ENCODE measurements at regions of chr19 and their contacts with region 1.

Region 1: GRCh38 chr19:7943444-7944176 is at the start of gene TIMM44:
- DNase-seq: peak; percentile 91 to 99 (median 98)
- ATAC-seq: peak; percentile 98
- H3K4me3 ChIP-seq: peak within 1 kb of the TSS; percentile 92
- H3K4me3 Mint-ChIP-seq: peak within 1 kb of the TSS; percentile 83 to 99 (median 94)
- H3K27ac ChIP-seq: peak within 1 kb of the TSS; percentile 96
- H3K27ac Mint-ChIP-seq: peak within 1 kb of the TSS; percentile 78 to 98 (median 96)
- H3K4me1 ChIP-seq: peaks cover 7 to 9% of the 10 kb centered on the region in 2 donors
- H3K4me1 Mint-ChIP-seq: peaks cover 10 to 44% (median 28%) of the 10 kb centered on the region in 7 donors
- H3K27me3 ChIP-seq: no peaks in the 10 kb centered on the region
- H3K27me3 Mint-ChIP-seq: no peaks in the 10 kb centered on the region
- total RNA-seq, gene TIMM44: 65.3 to 97.6 (median 73.8) TPM

Region 2: GRCh38 chr19:7680606-7681339 is 262.8 kb before region 1 on chr19 and contains the start of gene TRAPPC5:
- CTCF ChIA-PET with region 1: no interaction called
- POLR2A ChIA-PET with region 1: no interaction called
- intact Hi-C with region 1: loop called in 1 of 2 experiments (anchors 1 kb)
- DNase-seq: peak; percentile 80 to 95 (median 89)
- ATAC-seq: peak; percentile 86
- H3K4me3 ChIP-seq: peak within 1 kb of the TSS; percentile 84
- H3K4me3 Mint-ChIP-seq: peak within 1 kb of the TSS; percentile 83 to 96 (median 91)
- H3K27ac ChIP-seq: peak within 1 kb of the TSS; percentile 91
- H3K27ac Mint-ChIP-seq: peak within 1 kb of the TSS; percentile 54 to 95 (median 93)
- H3K4me1 ChIP-seq: peaks cover 26 to 32% of the 10 kb centered on the region in 2 donors
- H3K4me1 Mint-ChIP-seq: peaks cover 20 to 59% (median 46%) of the 10 kb centered on the region in 7 donors
- H3K27me3 ChIP-seq: peaks cover 0 to 6% of the 10 kb centered on the region in 2 donors
- H3K27me3 Mint-ChIP-seq: peaks cover 3 to 22% (median 8%) of the 10 kb centered on the region in 5 donors
- total RNA-seq, gene TRAPPC5: 43.7 to 79.3 (median 75.4) TPM

Region 3: GRCh38 chr19:7705387-7706187 is 238.0 kb before region 1 on chr19:
- CTCF ChIA-PET with region 1: no interaction called
- POLR2A ChIA-PET with region 1: no interaction called
- intact Hi-C with region 1: no loop called
- DNase-seq: peak; percentile 47 to 87 (median 79)
- ATAC-seq: peak; percentile 95
- H3K4me3 ChIP-seq: peak overlapping the region; percentile 34
- H3K4me3 Mint-ChIP-seq: peak overlapping the region; percentile 75 to 91 (median 83)
- H3K27ac ChIP-seq: peak overlapping the region; percentile 79
- H3K27ac Mint-ChIP-seq: peak overlapping the region; percentile 88 to 100 (median 97)
- H3K4me1 ChIP-seq: peaks cover 22 to 38% of the 10 kb centered on the region in 2 donors
- H3K4me1 Mint-ChIP-seq: peaks cover 27 to 71% (median 54%) of the 10 kb centered on the region in 7 donors
- H3K27me3 ChIP-seq: no peaks in the 10 kb centered on the region
- H3K27me3 Mint-ChIP-seq: peaks cover 0 to 20% (median 0%) of the 10 kb centered on the region in 5 donors

Region 4: DNA sequence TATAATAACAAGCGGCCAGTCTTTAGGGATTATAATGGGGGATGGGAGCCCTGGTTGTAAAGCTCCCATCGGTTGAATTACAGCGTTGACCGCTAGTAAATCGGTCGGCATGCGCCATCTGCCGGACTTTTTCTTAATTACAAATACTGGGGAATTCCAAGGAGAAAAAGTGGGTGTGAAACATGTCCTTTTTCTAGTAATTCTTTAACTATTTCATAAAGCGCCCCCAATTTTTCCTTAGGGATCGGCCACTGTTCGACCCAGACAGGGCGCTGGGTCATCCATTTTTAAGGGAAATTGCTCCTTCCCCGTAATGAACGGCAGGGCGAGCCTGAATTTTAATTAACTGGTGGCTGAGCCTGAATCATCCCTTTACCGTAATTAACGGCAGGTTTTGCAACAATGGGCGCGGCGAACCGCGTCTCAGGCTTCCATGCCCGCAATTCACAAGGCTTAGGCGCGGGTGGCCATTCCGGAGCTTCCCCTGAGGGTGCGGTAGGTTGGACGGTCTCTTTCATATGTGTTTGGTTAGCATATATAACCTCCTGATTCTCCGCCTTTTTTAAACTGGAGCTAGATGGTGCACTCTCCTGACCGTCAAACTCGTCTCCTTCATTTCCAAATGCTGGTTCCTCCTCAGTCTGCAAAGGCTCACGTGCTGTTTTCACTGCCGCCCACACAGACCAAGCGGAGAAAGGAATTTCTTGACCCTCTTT is 143.8 kb before region 1 on chr19:
- CTCF ChIA-PET with region 1: no interaction called
- POLR2A ChIA-PET with region 1: no interaction called
- intact Hi-C with region 1: no loop called
- DNase-seq: peak; percentile 13 to 61 (median 39)
- ATAC-seq: peak; percentile 71
- H3K4me3 ChIP-seq: no peak overlapping the region
- H3K4me3 Mint-ChIP-seq: peak overlapping the region in 1 of 10 donors; percentile 23
- H3K27ac ChIP-seq: no peak overlapping the region
- H3K27ac Mint-ChIP-seq: peak overlapping the region in 1 of 9 donors; percentile 63
- H3K4me1 ChIP-seq: no peaks in the 10 kb centered on the region
- H3K4me1 Mint-ChIP-seq: peaks cover 0 to 8% (median 6%) of the 10 kb centered on the region in 7 donors
- H3K27me3 ChIP-seq: no peaks in the 10 kb centered on the region
- H3K27me3 Mint-ChIP-seq: peaks cover 0 to 44% (median 11%) of the 10 kb centered on the region in 5 donors

Region 5: DNA sequence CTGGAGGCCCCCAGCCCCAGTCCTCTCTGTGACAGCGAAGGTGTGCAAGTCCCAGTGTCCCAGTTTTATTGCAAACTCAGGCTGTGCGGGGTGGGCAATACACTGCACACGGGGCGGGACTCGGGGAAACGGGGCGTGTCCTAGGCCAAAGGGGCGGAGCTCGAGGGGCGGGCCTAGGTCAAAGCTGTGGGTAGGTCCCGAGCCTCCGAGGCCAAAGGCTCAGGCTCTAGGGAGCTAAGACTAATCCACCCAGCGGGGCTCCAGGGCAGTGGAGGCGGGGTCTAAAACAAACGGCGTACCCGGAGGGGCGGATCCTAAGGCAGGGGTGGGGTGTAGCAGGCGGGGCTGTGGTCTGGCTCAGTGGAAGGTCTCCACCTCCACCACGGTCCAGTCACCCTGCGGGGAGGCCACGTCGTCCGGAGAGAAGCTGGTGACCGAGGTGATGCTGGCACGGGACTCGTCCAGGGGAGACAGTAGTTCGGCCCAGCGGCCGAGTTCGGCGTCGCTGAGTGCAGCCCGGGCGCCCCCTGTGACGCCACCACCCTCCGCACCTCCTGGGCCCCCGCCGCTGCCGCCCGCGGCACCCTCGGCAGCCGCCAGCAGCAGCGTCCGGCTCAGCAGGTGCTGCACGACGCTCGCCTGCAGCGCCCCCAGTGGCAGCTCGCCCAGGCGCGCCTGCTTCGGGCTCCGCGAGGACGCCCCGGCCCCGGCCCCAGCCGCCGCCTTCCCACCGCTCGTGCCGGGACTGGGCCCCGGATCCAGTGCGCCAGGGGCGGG is 74.7 kb before region 1 on chr19:
- CTCF ChIA-PET with region 1: interaction called, 6 read pairs
- POLR2A ChIA-PET with region 1: interaction called, 4 read pairs
- intact Hi-C with region 1: loop called in 1 of 2 experiments (anchors 1 kb)
- DNase-seq: peak in 8 of 9 donors; percentile 51 to 95 (median 89)
- ATAC-seq: peak; percentile 83
- H3K4me3 ChIP-seq: peak overlapping the region; percentile 74
- H3K4me3 Mint-ChIP-seq: peak overlapping the region; percentile 69 to 87 (median 81)
- H3K27ac ChIP-seq: peak overlapping the region; percentile 69
- H3K27ac Mint-ChIP-seq: peak overlapping the region; percentile 34 to 90 (median 58)
- H3K4me1 ChIP-seq: peaks cover 12 to 19% of the 10 kb centered on the region in 2 donors
- H3K4me1 Mint-ChIP-seq: peaks cover 24 to 39% (median 36%) of the 10 kb centered on the region in 7 donors
- H3K27me3 ChIP-seq: peaks cover 0 to 2% of the 10 kb centered on the region in 2 donors
- H3K27me3 Mint-ChIP-seq: peaks cover 0 to 62% (median 8%) of the 10 kb centered on the region in 5 donors

Region 6: DNA sequence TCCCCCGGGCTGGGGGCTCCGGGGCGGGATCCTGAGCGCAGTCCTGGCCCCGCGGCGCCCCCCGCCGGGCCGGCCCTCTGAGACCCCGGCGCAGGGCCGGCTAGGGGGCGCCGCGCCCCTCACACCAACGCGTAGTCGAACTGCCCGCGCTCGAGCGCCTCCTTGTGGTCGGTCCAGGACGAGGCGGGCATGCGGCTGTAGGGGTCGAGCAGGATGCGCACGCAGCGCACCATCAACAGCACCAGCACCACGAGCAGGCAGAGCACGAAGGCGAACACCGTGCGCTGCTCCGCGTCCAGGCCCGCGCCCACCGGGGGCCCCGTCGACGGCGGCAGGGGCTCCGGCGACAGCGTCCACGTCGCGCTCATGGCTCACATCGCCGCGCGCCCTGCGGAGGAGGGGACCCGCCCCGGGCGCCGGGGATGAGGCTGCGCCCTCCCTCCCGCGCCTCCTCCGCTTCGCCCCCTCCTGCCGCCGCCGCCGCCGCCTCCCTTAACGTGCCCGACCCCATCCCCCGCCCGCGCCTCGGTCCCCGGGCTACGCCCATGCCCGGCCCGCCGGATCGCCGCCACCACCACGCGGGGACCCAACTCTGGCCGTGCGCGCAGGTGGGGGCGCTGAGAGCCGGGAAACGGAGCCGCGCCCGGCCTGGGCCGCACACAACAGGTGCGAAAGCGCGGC is 18.3 kb before region 1 on chr19:
- CTCF ChIA-PET with region 1: interaction called, 14 read pairs
- POLR2A ChIA-PET with region 1: interaction called, 38 read pairs
- intact Hi-C with region 1: loop called (anchors 1 kb)
- DNase-seq: peak; percentile 58 to 83 (median 72)
- ATAC-seq: no peak
- H3K4me3 ChIP-seq: no peak overlapping the region
- H3K4me3 Mint-ChIP-seq: peak overlapping the region; percentile 74 to 88 (median 84)
- H3K27ac ChIP-seq: no peak overlapping the region
- H3K27ac Mint-ChIP-seq: peak overlapping the region in 6 of 9 donors; percentile 52 to 86 (median 76)
- H3K4me1 ChIP-seq: peaks cover 13 to 14% of the 10 kb centered on the region in 2 donors
- H3K4me1 Mint-ChIP-seq: peaks cover 5 to 38% (median 22%) of the 10 kb centered on the region in 7 donors
- H3K27me3 ChIP-seq: no peaks in the 10 kb centered on the region
- H3K27me3 Mint-ChIP-seq: no peaks in the 10 kb centered on the region

Region 7: DNA sequence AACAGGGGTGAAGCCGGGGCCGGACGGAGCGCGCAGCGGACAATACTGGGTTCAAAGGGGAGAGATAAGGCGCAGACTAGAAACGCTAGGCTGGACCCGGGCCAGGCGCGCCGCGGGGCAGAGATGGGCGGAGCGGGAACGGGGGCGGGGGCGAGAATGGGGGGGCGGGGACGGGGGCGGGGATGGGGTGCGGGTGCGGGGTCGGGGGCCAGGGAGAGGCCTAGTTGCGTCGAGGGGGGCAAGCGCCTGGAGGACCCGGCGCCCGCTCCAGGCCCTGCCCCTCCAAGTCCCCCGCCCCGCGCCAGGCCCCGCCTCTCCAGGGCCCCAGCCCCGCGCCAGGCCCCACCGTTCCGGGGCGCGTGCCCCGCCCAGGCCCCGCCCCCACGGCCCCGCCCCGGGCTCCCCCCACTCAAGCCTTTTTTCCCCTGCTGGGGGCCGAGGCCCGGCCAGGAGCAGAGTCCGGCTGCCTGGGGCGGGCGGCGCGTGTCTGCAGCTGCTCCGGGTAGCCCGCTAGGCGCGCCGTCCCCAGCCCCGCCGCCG is 265.4 kb after region 1 on chr19 and contains the start of gene CERS4:
- CTCF ChIA-PET with region 1: no interaction called
- POLR2A ChIA-PET with region 1: no interaction called
- intact Hi-C with region 1: loop called in 1 of 2 experiments (anchors 2 kb)
- DNase-seq: peak in 4 of 9 donors; percentile 69 to 82 (median 77)
- ATAC-seq: peak; percentile 92
- H3K4me3 ChIP-seq: peak within 1 kb of the TSS; percentile 84
- H3K4me3 Mint-ChIP-seq: peak within 1 kb of the TSS; percentile 72 to 94 (median 90)
- H3K27ac ChIP-seq: peak within 1 kb of the TSS; percentile 96
- H3K27ac Mint-ChIP-seq: peak within 1 kb of the TSS; percentile 72 to 96 (median 83)
- H3K4me1 ChIP-seq: peaks cover 5 to 17% of the 10 kb centered on the region in 2 donors
- H3K4me1 Mint-ChIP-seq: peaks cover 19 to 30% (median 27%) of the 10 kb centered on the region in 7 donors
- H3K27me3 ChIP-seq: no peaks in the 10 kb centered on the region
- H3K27me3 Mint-ChIP-seq: peaks cover 0 to 9% (median 0%) of the 10 kb centered on the region in 5 donors
- total RNA-seq, gene CERS4: 17.2 to 32.4 (median 27.4) TPM

Region 8: DNA sequence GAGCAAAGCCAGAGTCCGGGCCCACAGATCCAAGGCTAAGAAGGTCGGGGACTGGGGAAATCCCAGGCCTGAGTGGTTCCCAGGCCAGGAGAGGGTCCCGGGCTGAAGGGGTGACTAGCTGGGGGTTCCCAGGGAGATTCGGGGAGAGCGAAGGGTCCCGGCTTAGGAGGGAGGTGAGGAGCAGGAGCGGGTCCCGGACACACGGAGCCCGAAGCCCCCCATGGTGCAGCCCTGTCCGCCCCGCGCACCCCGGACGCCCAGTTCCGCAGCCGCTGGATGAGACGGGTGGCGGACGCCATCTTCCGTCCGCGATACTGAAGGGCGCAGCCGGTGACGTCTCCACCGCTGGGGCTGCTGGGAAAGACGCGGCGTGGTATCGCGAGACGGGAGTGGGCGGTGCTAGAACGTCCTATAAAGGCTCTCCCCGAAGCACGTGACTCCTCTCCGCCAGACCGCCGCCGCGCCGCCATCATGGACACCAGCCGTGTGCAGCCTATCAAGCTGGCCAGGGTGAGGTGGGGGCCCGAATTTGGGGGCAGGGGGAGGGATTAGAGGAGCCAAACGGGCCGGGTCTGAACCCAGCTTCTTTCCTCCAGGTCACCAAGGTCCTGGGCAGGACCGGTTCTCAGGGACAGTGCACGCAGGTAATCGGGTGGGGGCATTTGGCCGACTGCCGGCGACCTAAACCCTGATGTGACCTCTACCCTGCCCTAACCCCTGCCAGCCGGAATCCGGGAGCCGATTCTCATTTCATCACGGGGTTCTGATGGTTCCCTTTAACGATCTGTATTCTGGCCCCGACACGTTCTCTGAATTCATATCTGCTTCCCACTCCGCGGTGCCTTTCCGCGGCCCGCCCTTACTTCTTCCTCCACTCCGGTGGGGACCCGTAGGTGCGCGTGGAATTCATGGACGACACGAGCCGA is 377.7 kb after region 1 on chr19 and contains the starts of genes NDUFA7 and RPS28:
- CTCF ChIA-PET with region 1: no interaction called
- POLR2A ChIA-PET with region 1: interaction called, 12 read pairs
- intact Hi-C with region 1: loop called (anchors 1 kb)
- DNase-seq: peak; percentile 94 to 97 (median 96)
- ATAC-seq: peak; percentile 98
- H3K4me3 ChIP-seq: peak within 1 kb of the TSS; percentile 98
- H3K4me3 Mint-ChIP-seq: peak within 1 kb of the TSS; percentile 90 to 99 (median 98)
- H3K27ac ChIP-seq: peak within 1 kb of the TSS; percentile 96
- H3K27ac Mint-ChIP-seq: peak within 1 kb of the TSS; percentile 94 to 99 (median 98)
- H3K4me1 ChIP-seq: peaks cover 25% of the 10 kb centered on the region in 2 donors
- H3K4me1 Mint-ChIP-seq: peaks cover 16 to 44% (median 29%) of the 10 kb centered on the region in 7 donors
- H3K27me3 ChIP-seq: no peaks in the 10 kb centered on the region
- H3K27me3 Mint-ChIP-seq: no peaks in the 10 kb centered on the region
- total RNA-seq, gene NDUFA7: 16.8 to 50.3 (median 30.0) TPM
- total RNA-seq, gene RPS28: 2,319 to 4,111 (median 3,327) TPM

Region 9: GRCh38 chr19:8342684-8343482 is 399.3 kb after region 1 on chr19 and contains the start of gene KANK3:
- CTCF ChIA-PET with region 1: no interaction called
- POLR2A ChIA-PET with region 1: no interaction called
- intact Hi-C with region 1: no loop called
- DNase-seq: peak; percentile 74 to 90 (median 86)
- ATAC-seq: peak; percentile 100
- H3K4me3 ChIP-seq: peak within 1 kb of the TSS; percentile 64
- H3K4me3 Mint-ChIP-seq: peak within 1 kb of the TSS; percentile 64 to 88 (median 82)
- H3K27ac ChIP-seq: peak within 1 kb of the TSS; percentile 56
- H3K27ac Mint-ChIP-seq: peak within 1 kb of the TSS in 5 of 9 donors; percentile 8 to 84 (median 67)
- H3K4me1 ChIP-seq: no peaks in the 10 kb centered on the region
- H3K4me1 Mint-ChIP-seq: peaks cover 0 to 13% (median 6%) of the 10 kb centered on the region in 7 donors
- H3K27me3 ChIP-seq: no peaks in the 10 kb centered on the region
- H3K27me3 Mint-ChIP-seq: peaks cover 5 to 46% (median 5%) of the 10 kb centered on the region in 5 donors
- total RNA-seq, gene KANK3: 1.3 to 4.4 (median 1.8) TPM

Measured in naive thymus-derived CD4-positive, alpha-beta T cell (primary cell).